ENCODE measurements at regions of chr7 and their contacts with region 1.

Region 1: GRCh38 chr7:151503902-151504714 is 15.6 kb downstream of the RHEB start:
- DNase-seq: no peak
- ATAC-seq: peak; percentile 74
- H3K4me3 ChIP-seq: no peak overlapping the region
- H3K27ac ChIP-seq: peak overlapping the region in 1 of 2 donors; percentile 24
- H3K4me1 ChIP-seq: peaks cover 2% of the 10 kb centered on the region in 2 donors
- H3K27me3 ChIP-seq: no peaks in the 10 kb centered on the region

Region 2: GRCh38 chr7:151459726-151460473 is 44.2 kb before region 1 on chr7:
- intact Hi-C with region 1: no loop called
- DNase-seq: peak; percentile 85 to 93
- ATAC-seq: peak; percentile 93
- H3K4me3 ChIP-seq: no peak overlapping the region
- H3K27ac ChIP-seq: peak overlapping the region in 1 of 2 donors; percentile 85
- H3K4me1 ChIP-seq: no peaks in the 10 kb centered on the region
- H3K27me3 ChIP-seq: no peaks in the 10 kb centered on the region

Region 3: GRCh38 chr7:151541709-151542499 is 37.8 kb after region 1 on chr7:
- intact Hi-C with region 1: loop called in 1 of 2 experiments (anchors 2 kb)
- DNase-seq: no peak
- ATAC-seq: no peak
- H3K4me3 ChIP-seq: no peak overlapping the region
- H3K27ac ChIP-seq: no peak overlapping the region
- H3K4me1 ChIP-seq: no peaks in the 10 kb centered on the region
- H3K27me3 ChIP-seq: no peaks in the 10 kb centered on the region